ENCODE measurements at regions of chr22 and their contacts with region 1.

Region 1: GRCh38 chr22:40856513-40857308 is at the starts of genes ST13 and XPNPEP3:
- DNase-seq: peak; percentile 94 to 99 (median 96)
- ATAC-seq: peak; percentile 86
- H3K4me3 ChIP-seq: peak within 1 kb of the TSS; percentile 96
- H3K4me3 Mint-ChIP-seq: peak within 1 kb of the TSS; percentile 100
- H3K27ac ChIP-seq: peak within 1 kb of the TSS; percentile 95 to 99
- H3K27ac Mint-ChIP-seq: peak within 1 kb of the TSS; percentile 100
- H3K4me1 ChIP-seq: peaks cover 22% of the 10 kb centered on the region
- H3K4me1 Mint-ChIP-seq: peaks cover 80% of the 10 kb centered on the region
- H3K27me3 ChIP-seq: no peaks in the 10 kb centered on the region
- H3K27me3 Mint-ChIP-seq: no peaks in the 10 kb centered on the region
- CTCF ChIP-seq: peak; percentile 38
- total RNA-seq, gene ST13: 164 to 170 TPM
- total RNA-seq, gene XPNPEP3: 16.3 to 17.9 TPM

Region 2: DNA sequence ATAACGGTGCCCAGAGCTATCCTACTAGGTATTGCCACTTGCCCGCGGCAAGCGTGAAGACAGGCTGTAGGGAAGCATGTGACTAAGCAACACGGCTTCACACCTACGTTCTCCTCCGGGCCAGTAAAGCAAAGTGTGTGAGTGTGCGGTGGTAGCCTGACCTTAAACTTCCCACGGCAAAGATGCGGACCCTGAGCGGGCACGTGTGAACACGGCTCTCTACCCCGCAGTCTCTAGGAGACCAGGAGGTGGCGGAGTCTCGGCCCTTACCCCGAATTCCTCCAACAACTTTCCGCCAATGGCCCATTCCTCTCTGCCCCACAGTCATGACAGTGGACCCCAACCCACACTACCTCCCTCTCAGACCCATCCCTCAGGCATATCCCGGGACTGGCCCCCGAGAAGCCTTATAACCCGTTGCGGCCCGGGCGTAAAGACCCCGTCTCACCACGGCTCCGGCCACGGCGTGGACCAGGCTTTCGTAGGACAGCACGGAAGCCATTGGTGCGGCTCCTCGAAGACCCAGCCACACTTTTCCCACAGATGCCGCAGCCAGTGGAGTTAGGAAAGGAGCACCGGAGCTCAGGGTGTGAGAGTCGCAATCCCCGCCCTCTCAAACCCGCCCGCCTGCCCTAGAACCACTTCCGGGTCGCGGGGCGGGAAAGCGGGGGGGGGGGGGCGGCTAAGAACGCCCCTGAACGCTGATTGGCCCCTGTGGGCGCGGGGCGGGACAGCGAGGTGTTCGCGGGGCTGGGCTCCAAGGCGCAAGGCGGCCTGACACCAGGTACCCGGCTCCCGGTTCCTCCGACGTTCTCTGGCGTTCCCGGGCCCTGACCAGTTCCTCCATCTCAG is 37.7 kb before region 1 on chr22 and contains the start of gene SLC25A17:
- CTCF ChIA-PET with region 1: interaction called, 5 read pairs
- POLR2A ChIA-PET with region 1: interaction called, 11 read pairs
- intact Hi-C with region 1: loop called (anchors 1 to 2 kb)
- DNase-seq: peak; percentile 78 to 94 (median 86)
- ATAC-seq: peak; percentile 89
- H3K4me3 ChIP-seq: peak within 1 kb of the TSS; percentile 71
- H3K4me3 Mint-ChIP-seq: peak within 1 kb of the TSS; percentile 99
- H3K27ac ChIP-seq: peak within 1 kb of the TSS; percentile 61 to 68
- H3K27ac Mint-ChIP-seq: peak within 1 kb of the TSS; percentile 94
- H3K4me1 ChIP-seq: peaks cover 24% of the 10 kb centered on the region
- H3K4me1 Mint-ChIP-seq: peaks cover 46% of the 10 kb centered on the region
- H3K27me3 ChIP-seq: no peaks in the 10 kb centered on the region
- H3K27me3 Mint-ChIP-seq: no peaks in the 10 kb centered on the region
- CTCF ChIP-seq: peak; percentile 2
- total RNA-seq, gene SLC25A17: 2.8 to 4.0 TPM

Region 3: GRCh38 chr22:40898850-40899357 is 42.2 kb after region 1 on chr22:
- CTCF ChIA-PET with region 1: interaction called, 3 read pairs
- POLR2A ChIA-PET with region 1: interaction called, 3 read pairs
- intact Hi-C with region 1: loop called in 1 of 2 experiments (anchors 2 kb)
- DNase-seq: peak in 4 of 14 experiments; percentile 4 to 73 (median 68)
- ATAC-seq: peak; percentile 60
- H3K4me3 ChIP-seq: no peak overlapping the region
- H3K4me3 Mint-ChIP-seq: no peak overlapping the region
- H3K27ac ChIP-seq: no peak overlapping the region
- H3K27ac Mint-ChIP-seq: no peak overlapping the region
- H3K4me1 ChIP-seq: peaks cover 3% of the 10 kb centered on the region
- H3K4me1 Mint-ChIP-seq: peaks cover 6% of the 10 kb centered on the region
- H3K27me3 ChIP-seq: no peaks in the 10 kb centered on the region
- H3K27me3 Mint-ChIP-seq: no peaks in the 10 kb centered on the region
- CTCF ChIP-seq: peak; percentile 54

Region 4: GRCh38 chr22:41197038-41197972 is 340.6 kb after region 1 on chr22:
- CTCF ChIA-PET with region 1: interaction called, 3 read pairs
- POLR2A ChIA-PET with region 1: no interaction called
- intact Hi-C with region 1: loop called in 1 of 2 experiments (anchors 5 kb)
- DNase-seq: peak; percentile 62 to 93 (median 76)
- ATAC-seq: peak; percentile 85
- H3K4me3 ChIP-seq: peak overlapping the region; percentile 92
- H3K4me3 Mint-ChIP-seq: peak overlapping the region; percentile 95
- H3K27ac ChIP-seq: no peak overlapping the region
- H3K27ac Mint-ChIP-seq: peak overlapping the region; percentile 28
- H3K4me1 ChIP-seq: peaks cover 19% of the 10 kb centered on the region
- H3K4me1 Mint-ChIP-seq: peaks cover 14% of the 10 kb centered on the region
- H3K27me3 ChIP-seq: no peaks in the 10 kb centered on the region
- H3K27me3 Mint-ChIP-seq: no peaks in the 10 kb centered on the region
- CTCF ChIP-seq: no peak

Region 5: GRCh38 chr22:41589391-41590241 is 732.9 kb after region 1 on chr22 and contains the start of gene PMM1:
- CTCF ChIA-PET with region 1: no interaction called
- POLR2A ChIA-PET with region 1: interaction called, 5 read pairs
- intact Hi-C with region 1: loop called in 1 of 2 experiments (anchors 2 kb)
- DNase-seq: peak; percentile 100
- ATAC-seq: peak; percentile 97
- H3K4me3 ChIP-seq: peak within 1 kb of the TSS; percentile 98
- H3K4me3 Mint-ChIP-seq: peak within 1 kb of the TSS; percentile 82
- H3K27ac ChIP-seq: peak within 1 kb of the TSS; percentile 29 to 64
- H3K27ac Mint-ChIP-seq: peak within 1 kb of the TSS; percentile 47
- H3K4me1 ChIP-seq: peaks cover 21% of the 10 kb centered on the region
- H3K4me1 Mint-ChIP-seq: peaks cover 17% of the 10 kb centered on the region
- H3K27me3 ChIP-seq: no peaks in the 10 kb centered on the region
- H3K27me3 Mint-ChIP-seq: no peaks in the 10 kb centered on the region
- CTCF ChIP-seq: no peak
- total RNA-seq, gene PMM1: 24.8 to 25.5 TPM

Measured in CD4-positive, alpha-beta T cell (primary cell).